Activated CD4-positive, alpha-beta memory T cell treated with anti-CD3 and anti-CD28 coated beads for 36 hours (primary cell): ENCODE measurements at regions of chr3 and their contacts with region 1.

Region 1: DNA sequence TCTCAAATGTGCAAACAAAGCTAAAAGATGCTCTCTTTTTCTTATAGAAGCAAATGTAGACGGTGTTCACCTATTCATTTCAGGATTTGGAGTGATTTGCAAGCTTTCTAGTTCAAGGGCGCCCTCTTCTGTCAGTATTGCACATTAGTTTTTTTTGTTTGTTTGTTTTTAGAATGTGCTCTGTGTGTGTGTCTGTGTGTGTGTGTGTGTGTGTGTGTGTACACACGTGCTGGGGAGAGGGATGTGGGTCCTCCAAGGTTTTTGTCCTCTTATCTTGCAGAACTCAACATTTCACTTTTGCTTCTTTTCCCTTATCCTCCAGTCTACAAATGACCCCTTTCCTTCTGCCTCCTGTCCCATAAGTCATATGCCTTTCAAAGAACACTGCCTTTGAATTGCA is 23.5 kb downstream of the DNAH1 start:
- DNase-seq: peak; percentile 44
- H3K4me3 Mint-ChIP-seq: no peak overlapping the region
- H3K27ac Mint-ChIP-seq: no peak overlapping the region
- H3K4me1 Mint-ChIP-seq: peaks cover 6% of the 10 kb centered on the region
- H3K27me3 Mint-ChIP-seq: no peaks in the 10 kb centered on the region

Region 2: GRCh38 chr3:52001443-52001974 is 338.1 kb before region 1 on chr3:
- CTCF ChIA-PET with region 1: interaction called, 7 read pairs
- POLR2A ChIA-PET with region 1: no interaction called
- intact Hi-C with region 1: loop called (anchors 5 kb)
- DNase-seq: peak; percentile 90
- H3K4me3 Mint-ChIP-seq: no peak overlapping the region
- H3K27ac Mint-ChIP-seq: no peak overlapping the region
- H3K4me1 Mint-ChIP-seq: peaks cover 14% of the 10 kb centered on the region
- H3K27me3 Mint-ChIP-seq: no peaks in the 10 kb centered on the region

Region 3: GRCh38 chr3:52220380-52221026 is 119.1 kb before region 1 on chr3:
- CTCF ChIA-PET with region 1: interaction called, 271 read pairs
- POLR2A ChIA-PET with region 1: interaction called, 6 read pairs
- intact Hi-C with region 1: loop called (anchors 1 kb)
- DNase-seq: peak; percentile 94
- H3K4me3 Mint-ChIP-seq: no peak overlapping the region
- H3K27ac Mint-ChIP-seq: peak overlapping the region; percentile 49
- H3K4me1 Mint-ChIP-seq: peaks cover 83% of the 10 kb centered on the region
- H3K27me3 Mint-ChIP-seq: no peaks in the 10 kb centered on the region

Region 4: DNA sequence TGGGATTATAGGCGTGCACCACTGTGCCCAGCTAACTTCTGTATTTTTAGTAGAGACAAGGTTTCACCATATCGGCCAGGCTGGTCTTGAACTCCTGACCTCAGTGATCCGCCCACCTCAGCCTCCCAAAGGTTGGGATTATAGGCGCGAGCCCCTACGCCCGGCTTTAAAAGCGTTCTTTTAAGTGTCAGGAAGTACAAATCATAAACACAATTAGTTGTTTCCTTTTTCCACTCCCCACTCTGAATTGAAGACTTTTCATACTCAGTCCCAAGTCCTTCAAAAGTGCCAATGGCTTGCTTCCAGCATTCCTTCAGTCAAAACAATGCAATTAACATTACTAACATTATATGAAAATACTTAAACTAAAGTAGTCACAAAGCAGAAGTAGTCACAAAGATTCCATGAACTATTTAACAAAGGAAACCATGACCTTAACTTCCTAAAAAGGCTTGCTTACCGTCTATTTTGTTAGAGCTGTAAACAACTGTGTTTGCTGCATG is 69.3 kb before region 1 on chr3:
- CTCF ChIA-PET with region 1: interaction called, 10 read pairs
- POLR2A ChIA-PET with region 1: no interaction called
- intact Hi-C with region 1: no loop called
- DNase-seq: peak; percentile 31
- H3K4me3 Mint-ChIP-seq: peak overlapping the region; percentile 77
- H3K27ac Mint-ChIP-seq: peak overlapping the region; percentile 91
- H3K4me1 Mint-ChIP-seq: peaks cover 85% of the 10 kb centered on the region
- H3K27me3 Mint-ChIP-seq: no peaks in the 10 kb centered on the region

Region 5: GRCh38 chr3:52298149-52299098 is 41.2 kb before region 1 on chr3:
- CTCF ChIA-PET with region 1: interaction called, 86 read pairs
- POLR2A ChIA-PET with region 1: no interaction called
- intact Hi-C with region 1: no loop called
- DNase-seq: no peak
- H3K4me3 Mint-ChIP-seq: no peak overlapping the region
- H3K27ac Mint-ChIP-seq: no peak overlapping the region
- H3K4me1 Mint-ChIP-seq: peaks cover 7% of the 10 kb centered on the region
- H3K27me3 Mint-ChIP-seq: no peaks in the 10 kb centered on the region

Region 6: GRCh38 chr3:52349571-52350339 is 10.1 kb after region 1 on chr3:
- CTCF ChIA-PET with region 1: interaction called, 10 read pairs
- POLR2A ChIA-PET with region 1: no interaction called
- intact Hi-C with region 1: no loop called
- DNase-seq: no peak
- H3K4me3 Mint-ChIP-seq: no peak overlapping the region
- H3K27ac Mint-ChIP-seq: no peak overlapping the region
- H3K4me1 Mint-ChIP-seq: no peaks in the 10 kb centered on the region
- H3K27me3 Mint-ChIP-seq: no peaks in the 10 kb centered on the region